ENCODE measurements at regions of chr7 and their contacts with region 1.

Region 1: DNA sequence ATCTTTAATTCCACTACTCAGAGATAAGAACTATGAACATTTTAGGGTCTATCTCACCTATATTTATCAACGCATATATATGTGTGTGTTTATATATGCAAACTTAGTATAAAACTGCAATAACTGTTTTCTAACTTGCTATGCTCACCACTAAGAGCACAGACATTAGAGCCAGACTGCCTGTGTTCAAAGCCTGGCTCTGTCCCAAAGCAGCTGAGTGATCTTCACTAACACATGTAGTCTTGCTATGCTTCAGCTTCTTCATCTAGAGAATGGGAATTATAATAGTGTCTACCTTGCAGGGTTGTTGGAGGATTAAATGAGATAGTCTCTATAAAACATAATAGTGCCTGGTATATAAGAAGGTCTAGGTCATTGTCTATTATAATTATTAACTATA is 165.5 kb downstream of the MAGI2 start:
- DNase-seq: no peak
- ATAC-seq: no peak
- H3K4me3 Mint-ChIP-seq: no peak overlapping the region
- H3K27ac Mint-ChIP-seq: no peak overlapping the region
- H3K4me1 Mint-ChIP-seq: no peaks in the 10 kb centered on the region
- H3K27me3 Mint-ChIP-seq: peaks cover 3% of the 10 kb centered on the region

Region 2: GRCh38 chr7:78363866-78364265 is 924.1 kb before region 1 on chr7:
- CTCF ChIA-PET with region 1: no interaction called
- POLR2A ChIA-PET with region 1: no interaction called
- intact Hi-C with region 1: no loop called
- DNase-seq: no peak
- ATAC-seq: no peak
- H3K4me3 Mint-ChIP-seq: no peak overlapping the region
- H3K27ac Mint-ChIP-seq: no peak overlapping the region
- H3K4me1 Mint-ChIP-seq: no peaks in the 10 kb centered on the region
- H3K27me3 Mint-ChIP-seq: no peaks in the 10 kb centered on the region

Region 3: GRCh38 chr7:79298145-79298760 is 10.3 kb after region 1 on chr7:
- CTCF ChIA-PET with region 1: interaction called, 14 read pairs
- POLR2A ChIA-PET with region 1: no interaction called
- intact Hi-C with region 1: no loop called
- DNase-seq: peak; percentile 4
- ATAC-seq: no peak
- H3K4me3 Mint-ChIP-seq: no peak overlapping the region
- H3K27ac Mint-ChIP-seq: no peak overlapping the region
- H3K4me1 Mint-ChIP-seq: no peaks in the 10 kb centered on the region
- H3K27me3 Mint-ChIP-seq: no peaks in the 10 kb centered on the region